K562 (cell line): ENCODE measurements at regions of chr9 and their contacts with region 1.

Region 1: DNA sequence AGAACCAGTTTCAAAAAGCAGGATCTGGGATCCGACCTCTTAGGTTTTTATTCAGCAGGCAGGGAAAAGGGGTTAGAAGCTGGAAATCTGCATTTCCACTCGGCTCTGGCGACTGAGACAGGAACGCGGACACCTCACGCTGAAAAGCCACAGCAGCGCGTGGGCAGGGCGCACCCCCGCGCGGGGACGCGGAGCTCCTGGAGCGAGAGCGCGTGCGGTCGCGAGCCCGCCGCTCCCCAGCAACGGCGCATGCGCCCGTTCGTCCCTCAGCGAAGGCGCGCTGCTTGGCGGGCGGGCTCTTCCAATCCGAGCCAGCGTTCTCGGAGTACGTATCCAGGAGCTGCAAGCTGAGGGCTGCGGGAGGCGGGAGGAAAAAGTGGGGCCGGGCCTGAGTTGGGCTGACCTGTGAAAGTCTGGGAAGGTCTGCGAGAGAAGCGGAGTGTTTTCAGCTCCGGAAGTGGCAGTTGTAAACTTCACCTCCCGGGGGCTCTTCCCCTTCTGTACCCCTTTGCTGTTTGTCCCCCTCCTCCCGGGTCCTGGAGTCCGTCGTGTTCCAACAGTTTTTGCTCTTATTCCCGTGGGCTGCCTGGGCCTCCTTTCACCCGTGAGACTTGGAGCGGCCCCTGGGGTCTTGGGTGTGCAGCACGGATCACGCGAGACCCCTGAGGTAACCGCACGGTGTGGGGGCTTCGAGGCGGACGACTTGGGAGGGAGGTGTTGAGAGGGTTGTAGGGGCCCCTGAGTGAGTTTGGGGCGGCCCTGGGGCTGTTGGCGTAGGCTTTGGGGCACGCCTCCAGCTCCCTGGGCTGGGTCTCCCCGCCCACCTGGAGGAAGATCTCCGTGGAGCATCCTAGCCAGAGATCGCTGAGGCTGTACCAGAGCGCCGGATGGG is at the start of gene CCDC171:
- DNase-seq: peak; percentile 83 to 91 (median 88)
- ATAC-seq: peak; percentile 98
- H3K4me3 ChIP-seq: peak within 1 kb of the TSS; percentile 42
- H3K27ac ChIP-seq: peak within 1 kb of the TSS; percentile 65
- H3K4me1 ChIP-seq: peaks cover 0 to 12% of the 10 kb centered on the region in 2 experiments; a peak in 3 of 5 replicates
- H3K27me3 ChIP-seq: no peaks in the 10 kb centered on the region
- CTCF ChIP-seq: no peak
- EP300 ChIP-seq: no peak
- POLR2A ChIP-seq: peak; percentile 46; the same call in 1 of the 2 replicates
- RAD21 ChIP-seq: no peak
- polyA plus RNA-seq, gene CCDC171: 0.08 to 0.17 TPM

Region 2: GRCh38 chr9:15510789-15511575 is 41.9 kb before region 1 on chr9 and contains the start of gene PSIP1:
- CTCF ChIA-PET with region 1: no interaction called
- POLR2A ChIA-PET with region 1: interaction called, 5 read pairs
- in situ Hi-C with region 1: no loop called
- intact Hi-C with region 1: loop called (anchors 5 kb)
- DNase-seq: peak; percentile 67 to 84 (median 73)
- ATAC-seq: peak; percentile 89
- H3K4me3 ChIP-seq: peak within 1 kb of the TSS; percentile 81
- H3K27ac ChIP-seq: peak within 1 kb of the TSS; percentile 98
- H3K4me1 ChIP-seq: peaks cover 3 to 7% of the 10 kb centered on the region in 2 experiments; a peak in 2 of 5 replicates
- H3K27me3 ChIP-seq: no peaks in the 10 kb centered on the region
- CTCF ChIP-seq: no peak
- EP300 ChIP-seq: no peak
- POLR2A ChIP-seq: peak; percentile 67
- RAD21 ChIP-seq: no peak
- polyA plus RNA-seq, gene PSIP1: 18.8 to 22.7 TPM

Region 3: GRCh38 chr9:15592317-15592716 is 39.4 kb after region 1 on chr9:
- CTCF ChIA-PET with region 1: no interaction called
- POLR2A ChIA-PET with region 1: no interaction called
- in situ Hi-C with region 1: no loop called
- intact Hi-C with region 1: loop called (anchors 5 kb)
- DNase-seq: no peak
- ATAC-seq: no peak
- H3K4me3 ChIP-seq: no peak overlapping the region
- H3K27ac ChIP-seq: no peak overlapping the region
- H3K4me1 ChIP-seq: no peaks in the 10 kb centered on the region
- H3K27me3 ChIP-seq: no peaks in the 10 kb centered on the region
- CTCF ChIP-seq: no peak
- EP300 ChIP-seq: no peak
- POLR2A ChIP-seq: no peak
- RAD21 ChIP-seq: no peak

Region 4: GRCh38 chr9:15606643-15607472 is 54.0 kb after region 1 on chr9:
- CTCF ChIA-PET with region 1: no interaction called
- POLR2A ChIA-PET with region 1: no interaction called
- in situ Hi-C with region 1: no loop called
- intact Hi-C with region 1: loop called (anchors 2 kb)
- DNase-seq: peak; percentile 6 to 28 (median 12)
- ATAC-seq: peak; percentile 57; the same call in 1 of the 3 replicates
- H3K4me3 ChIP-seq: no peak overlapping the region
- H3K27ac ChIP-seq: no peak overlapping the region
- H3K4me1 ChIP-seq: no peaks in the 10 kb centered on the region
- H3K27me3 ChIP-seq: no peaks in the 10 kb centered on the region
- CTCF ChIP-seq: peak in 2 of 3 experiments; percentile 26 to 65; a peak in 3 of 6 replicates
- EP300 ChIP-seq: no peak
- POLR2A ChIP-seq: no peak
- RAD21 ChIP-seq: peak; percentile 48 to 65